SK-N-SH (cell line): ENCODE measurements at regions of chr17 and their contacts with region 1.

Region 1: DNA sequence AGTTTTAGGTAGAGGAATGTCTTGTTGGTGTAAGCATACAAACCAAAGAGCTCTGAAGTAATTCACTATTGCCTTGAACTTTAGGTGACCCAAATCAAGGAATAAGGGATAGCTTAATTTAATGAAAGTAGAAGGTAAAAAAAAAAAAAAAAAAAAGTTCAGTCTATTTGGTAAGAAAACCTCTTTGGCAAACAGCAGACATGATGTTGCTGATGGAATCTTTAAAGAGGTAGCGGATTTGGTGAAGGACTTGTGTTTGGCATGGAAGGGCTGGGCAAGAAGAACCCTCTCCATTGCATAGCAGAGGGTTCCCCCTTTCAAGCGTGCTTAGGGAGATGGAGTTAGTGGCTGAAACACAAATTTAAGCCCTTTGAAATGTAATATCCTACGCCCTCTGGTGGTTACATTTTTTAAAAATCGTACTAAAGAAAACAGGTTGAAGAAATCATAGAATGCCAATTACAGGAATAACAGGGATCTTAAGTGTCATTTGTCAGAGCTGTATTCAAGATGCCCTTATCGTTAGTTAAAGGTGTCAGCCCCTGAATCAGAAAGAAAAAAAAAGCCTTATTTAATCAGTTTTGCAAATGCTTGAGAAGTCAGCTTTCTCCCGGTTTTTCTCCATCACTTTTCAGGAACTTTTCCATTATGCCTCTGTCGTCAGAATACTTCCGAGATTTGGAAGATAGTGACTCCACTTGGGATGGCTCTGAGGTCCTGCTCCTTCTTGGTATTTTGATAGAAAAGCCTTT is 383.1 kb downstream of the KCNJ2 start:
- DNase-seq: peak; percentile 72
- H3K4me3 ChIP-seq: no peak overlapping the region
- H3K27ac ChIP-seq: no peak overlapping the region; a peak in 1 of 4 replicates
- H3K4me1 ChIP-seq: peaks cover 0 to 2% of the 10 kb centered on the region in 2 experiments; a peak in 2 of 4 replicates
- H3K27me3 ChIP-seq: no peaks in the 10 kb centered on the region
- CTCF ChIP-seq: peak; percentile 81
- EP300 ChIP-seq: no peak
- RAD21 ChIP-seq: peak; percentile 87

Region 2: DNA sequence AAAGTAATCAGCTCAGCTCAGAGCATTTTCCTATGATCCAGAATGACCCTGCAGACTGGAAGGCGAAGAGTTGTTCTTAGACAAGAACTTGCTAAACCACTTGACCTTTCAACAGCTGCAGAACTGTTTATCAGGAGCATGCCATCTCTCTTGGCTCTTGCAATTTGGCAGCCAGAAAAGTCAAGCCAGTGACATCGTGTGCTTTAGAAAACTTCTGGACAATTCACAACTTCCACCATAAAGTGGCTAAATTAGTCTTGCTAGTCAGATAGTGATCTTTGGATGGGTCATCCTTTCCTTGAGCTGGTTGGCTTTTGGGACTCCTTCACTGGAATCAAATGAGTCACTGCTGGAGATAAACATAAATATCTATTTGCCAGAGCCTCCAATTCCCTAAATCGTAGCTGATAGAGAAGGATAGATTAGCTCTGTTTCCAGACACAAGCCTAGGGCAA is 991.4 kb before region 1 on chr17:
- CTCF ChIA-PET with region 1: interaction called, 10 read pairs
- POLR2A ChIA-PET with region 1: no interaction called
- DNase-seq: peak; percentile 36
- H3K4me3 ChIP-seq: 0 out of 4 replicates have a peak overlapping the region, but pooled peaks of 1 of the 2 experiments have one; percentile 5
- H3K27ac ChIP-seq: peak overlapping the region in 1 of 2 experiments; percentile 12; a peak in 2 of 4 replicates
- H3K4me1 ChIP-seq: peaks cover 5 to 6% of the 10 kb centered on the region in 2 experiments; a peak in 2 of 4 replicates
- H3K27me3 ChIP-seq: no peaks in the 10 kb centered on the region
- CTCF ChIP-seq: no peak
- EP300 ChIP-seq: peak in 1 of 2 experiments; percentile 76; a peak in 3 of 4 replicates
- RAD21 ChIP-seq: no peak

Region 3: DNA sequence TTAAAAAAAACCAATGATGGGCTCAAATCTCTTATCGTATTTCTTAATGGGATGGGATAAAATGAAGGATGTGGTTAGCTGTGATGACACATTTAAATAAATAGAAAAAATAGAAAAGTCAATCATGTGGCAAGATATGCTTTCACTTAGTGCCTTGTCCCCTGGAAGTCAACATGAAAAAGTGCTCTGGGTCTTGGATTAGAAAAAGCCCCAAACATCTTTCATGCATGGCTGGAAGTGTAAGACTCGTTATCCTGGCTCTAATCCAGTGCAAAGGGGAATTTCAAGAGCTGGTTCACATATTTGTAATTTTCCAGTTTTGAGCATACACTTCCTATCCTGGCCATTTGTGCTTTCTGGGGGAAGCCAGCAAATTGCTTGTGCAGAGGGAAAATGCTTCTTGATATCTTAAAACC is 977.1 kb before region 1 on chr17:
- CTCF ChIA-PET with region 1: interaction called, 14 read pairs
- POLR2A ChIA-PET with region 1: no interaction called
- DNase-seq: no peak
- H3K4me3 ChIP-seq: no peak overlapping the region
- H3K27ac ChIP-seq: peak overlapping the region; percentile 11 to 31; a peak in 3 of 4 replicates
- H3K4me1 ChIP-seq: peaks cover 3 to 23% of the 10 kb centered on the region in 2 experiments; a peak in 3 of 4 replicates
- H3K27me3 ChIP-seq: no peaks in the 10 kb centered on the region
- CTCF ChIP-seq: no peak
- EP300 ChIP-seq: peak in 1 of 2 experiments; percentile 38; a peak in 1 of 4 replicates
- RAD21 ChIP-seq: no peak

Region 4: DNA sequence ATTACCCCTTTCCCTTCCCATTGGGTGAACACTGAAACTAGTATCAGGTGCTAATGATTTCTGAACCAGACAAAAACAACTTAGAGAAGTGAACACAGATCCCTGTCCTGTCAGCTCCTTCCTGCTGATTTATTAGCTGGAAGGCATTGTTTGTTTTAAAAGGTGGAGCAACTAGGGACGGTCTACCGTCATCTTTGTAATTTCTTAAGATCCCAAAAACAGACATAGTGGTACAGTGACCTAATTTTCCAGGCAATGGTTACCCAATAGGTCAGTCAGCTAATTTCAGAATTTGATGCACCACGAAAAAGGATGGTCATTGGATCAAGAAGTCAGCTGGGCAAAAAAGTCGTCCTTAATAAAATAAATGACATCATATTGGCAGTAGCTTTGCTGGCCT is 504.8 kb before region 1 on chr17:
- CTCF ChIA-PET with region 1: no interaction called
- POLR2A ChIA-PET with region 1: no interaction called
- DNase-seq: no peak
- H3K4me3 ChIP-seq: no peak overlapping the region
- H3K27ac ChIP-seq: no peak overlapping the region
- H3K4me1 ChIP-seq: no peaks in the 10 kb centered on the region
- H3K27me3 ChIP-seq: no peaks in the 10 kb centered on the region
- CTCF ChIP-seq: no peak
- EP300 ChIP-seq: no peak
- RAD21 ChIP-seq: no peak

Region 5: DNA sequence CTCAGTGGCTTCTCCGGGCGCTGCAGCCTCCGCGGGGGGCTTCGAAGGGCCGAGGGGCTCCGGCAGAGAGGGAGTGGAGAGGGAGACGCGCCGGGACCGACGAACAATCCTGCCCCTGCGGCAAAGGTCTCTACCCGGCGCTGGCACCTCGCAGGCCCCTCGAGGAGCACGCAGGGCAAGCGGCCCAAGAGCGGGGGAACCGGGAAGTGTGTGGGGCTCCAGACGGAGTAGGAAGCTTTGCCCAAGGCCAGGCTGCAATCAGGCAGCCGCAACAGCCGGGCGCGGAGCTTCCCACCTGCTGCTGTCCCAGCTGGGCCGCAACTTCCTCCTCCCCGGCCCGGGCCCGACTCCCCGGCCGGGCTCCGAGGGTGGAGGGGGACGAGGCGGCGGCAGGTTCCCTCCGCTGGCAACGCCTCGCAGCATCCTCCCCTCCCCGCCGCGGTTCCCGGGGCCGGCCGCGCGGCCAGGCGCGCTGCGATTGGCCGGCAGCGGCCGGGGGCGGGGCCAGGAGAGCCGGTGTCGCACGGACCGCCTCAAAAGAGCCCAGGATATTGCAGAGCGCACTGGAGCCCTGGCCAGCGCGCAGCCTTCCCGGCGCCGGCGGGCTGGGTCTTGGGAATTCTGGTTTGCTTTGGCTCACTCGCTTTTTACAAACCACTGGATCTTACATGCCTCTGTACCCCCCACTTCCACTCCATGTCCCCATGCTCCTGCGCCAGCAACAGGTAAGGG is 383.3 kb before region 1 on chr17 and contains the start of gene KCNJ2:
- CTCF ChIA-PET with region 1: interaction called, 51 read pairs
- POLR2A ChIA-PET with region 1: no interaction called
- DNase-seq: peak; percentile 97
- H3K4me3 ChIP-seq: peak within 1 kb of the TSS; percentile 85 to 86
- H3K27ac ChIP-seq: peak within 1 kb of the TSS; percentile 46 to 78
- H3K4me1 ChIP-seq: peaks cover 3 to 33% of the 10 kb centered on the region in 2 experiments; a peak in 3 of 4 replicates
- H3K27me3 ChIP-seq: no peaks in the 10 kb centered on the region
- CTCF ChIP-seq: no peak
- EP300 ChIP-seq: peak; percentile 17 to 42; a peak in 2 of 4 replicates
- RAD21 ChIP-seq: peak; percentile 9; the same call in 1 of the 2 replicates
- polyA plus RNA-seq, gene KCNJ2: 0.18 and 0.21 TPM in 2 replicates

Region 6: GRCh38 chr17:70454377-70454776 is 98.0 kb before region 1 on chr17:
- CTCF ChIA-PET with region 1: no interaction called
- POLR2A ChIA-PET with region 1: no interaction called
- DNase-seq: no peak
- H3K4me3 ChIP-seq: no peak overlapping the region
- H3K27ac ChIP-seq: no peak overlapping the region
- H3K4me1 ChIP-seq: no peaks in the 10 kb centered on the region
- H3K27me3 ChIP-seq: no peaks in the 10 kb centered on the region
- CTCF ChIP-seq: no peak
- EP300 ChIP-seq: no peak
- RAD21 ChIP-seq: no peak

Region 7: DNA sequence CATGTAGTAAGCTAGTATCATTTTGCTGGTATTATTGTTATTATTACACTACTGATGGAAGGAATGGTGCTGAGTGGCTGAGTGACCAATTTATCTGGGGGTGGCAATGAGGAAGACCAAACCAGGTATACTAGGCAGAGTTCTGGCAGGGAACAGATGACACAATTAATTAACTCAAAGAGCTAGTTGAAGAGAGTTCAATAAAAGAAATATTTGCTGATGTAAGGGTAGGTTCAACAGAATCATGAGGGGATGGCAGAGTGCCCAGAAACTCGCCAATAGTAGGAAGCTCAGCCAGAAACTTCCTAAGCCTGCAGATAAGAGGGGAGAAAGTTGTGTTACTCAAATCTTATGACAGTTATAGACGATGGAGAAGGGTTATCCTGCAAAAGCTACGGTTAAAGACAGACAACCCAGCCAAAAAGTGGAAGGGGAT is 30.6 kb before region 1 on chr17:
- CTCF ChIA-PET with region 1: interaction called, 12 read pairs
- POLR2A ChIA-PET with region 1: no interaction called
- DNase-seq: no peak
- H3K4me3 ChIP-seq: no peak overlapping the region
- H3K27ac ChIP-seq: no peak overlapping the region
- H3K4me1 ChIP-seq: no peaks in the 10 kb centered on the region
- H3K27me3 ChIP-seq: no peaks in the 10 kb centered on the region
- CTCF ChIP-seq: no peak
- EP300 ChIP-seq: no peak
- RAD21 ChIP-seq: no peak

Region 8: DNA sequence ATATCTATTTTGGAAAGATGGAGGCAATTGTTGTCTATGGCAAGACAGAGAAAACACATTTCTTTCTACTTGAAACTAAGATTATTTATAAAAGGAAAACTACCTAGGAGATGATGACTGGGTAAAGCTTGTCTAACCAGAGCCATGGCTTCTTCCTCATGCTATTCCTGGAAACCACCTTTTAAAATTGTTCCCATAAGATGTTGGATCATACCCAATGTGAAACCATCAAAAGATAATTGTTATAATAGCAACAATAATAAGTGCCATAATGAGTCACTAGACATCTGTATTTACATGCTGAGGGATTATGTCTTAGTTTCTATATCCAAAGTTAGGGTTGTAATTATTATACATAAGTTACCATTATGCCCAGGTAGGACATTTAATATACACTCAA is 45.4 kb after region 1 on chr17:
- CTCF ChIA-PET with region 1: no interaction called
- POLR2A ChIA-PET with region 1: no interaction called
- DNase-seq: no peak
- H3K4me3 ChIP-seq: no peak overlapping the region
- H3K27ac ChIP-seq: no peak overlapping the region
- H3K4me1 ChIP-seq: no peaks in the 10 kb centered on the region
- H3K27me3 ChIP-seq: no peaks in the 10 kb centered on the region
- CTCF ChIP-seq: no peak
- EP300 ChIP-seq: no peak
- RAD21 ChIP-seq: no peak